Activated CD4-positive, alpha-beta T cell treated with anti-CD3 and anti-CD28 coated beads for 36 hours (primary cell): ENCODE measurements at regions of chrX and their contacts with region 1.

Region 1: DNA sequence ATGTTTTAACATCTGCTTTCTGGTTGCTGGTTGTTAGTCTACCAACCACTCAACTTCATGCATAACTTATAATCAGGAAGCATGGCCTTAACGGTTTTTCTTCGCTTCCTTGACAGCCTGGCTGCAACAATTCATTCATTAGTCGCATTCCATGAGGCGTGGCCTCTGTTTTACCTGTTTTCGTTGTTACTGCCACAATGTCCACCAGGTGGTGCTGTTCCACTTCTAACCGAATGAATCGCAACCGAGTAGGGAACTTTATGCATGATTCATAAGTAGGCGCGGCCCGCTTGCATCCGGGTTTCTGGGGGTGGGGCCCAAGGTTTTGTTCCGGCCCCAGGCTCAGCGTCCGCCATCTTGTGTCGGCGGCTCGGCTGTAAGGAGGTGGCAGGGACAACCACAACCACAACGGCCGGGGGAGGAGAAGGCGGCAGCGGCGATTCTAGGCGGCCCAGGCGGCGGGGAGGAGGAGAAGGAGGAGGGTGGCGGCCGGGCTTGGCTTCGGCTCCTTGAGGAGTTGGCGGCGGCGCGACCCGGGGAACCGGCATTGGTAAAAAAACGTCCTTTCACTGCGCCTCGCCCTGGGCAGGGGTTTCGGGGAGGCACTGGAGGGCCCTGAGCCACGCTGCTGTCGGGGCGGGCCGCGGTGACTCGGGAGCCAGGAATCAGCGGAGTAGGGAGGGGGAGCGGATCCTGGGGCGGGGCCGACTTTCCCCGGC is at the start of gene UBA1:
- DNase-seq: peak; percentile 94
- ATAC-seq: peak; percentile 69
- H3K4me3 Mint-ChIP-seq: peak within 1 kb of the TSS; percentile 91
- H3K27ac Mint-ChIP-seq: peak within 1 kb of the TSS; percentile 92
- H3K4me1 Mint-ChIP-seq: peaks cover 54% of the 10 kb centered on the region
- H3K27me3 Mint-ChIP-seq: no peaks in the 10 kb centered on the region
- total RNA-seq, gene UBA1: 224 to 249 TPM

Region 2: GRCh38 chrX:47093248-47093647 is 100.4 kb before region 1 on chrX:
- CTCF ChIA-PET with region 1: no interaction called
- POLR2A ChIA-PET with region 1: no interaction called
- intact Hi-C with region 1: no loop called
- DNase-seq: peak; percentile 10
- ATAC-seq: no peak
- H3K4me3 Mint-ChIP-seq: no peak overlapping the region
- H3K27ac Mint-ChIP-seq: no peak overlapping the region
- H3K4me1 Mint-ChIP-seq: peaks cover 10% of the 10 kb centered on the region
- H3K27me3 Mint-ChIP-seq: no peaks in the 10 kb centered on the region

Region 3: GRCh38 chrX:47144626-47145394 is 48.8 kb before region 1 on chrX and contains the starts of genes NDUFB11 and RBM10:
- CTCF ChIA-PET with region 1: interaction called, 4 read pairs
- POLR2A ChIA-PET with region 1: interaction called, 6 read pairs
- intact Hi-C with region 1: loop called (anchors 1 to 2 kb)
- DNase-seq: peak; percentile 94
- ATAC-seq: peak; percentile 93
- H3K4me3 Mint-ChIP-seq: peak within 1 kb of the TSS; percentile 98
- H3K27ac Mint-ChIP-seq: peak within 1 kb of the TSS; percentile 100
- H3K4me1 Mint-ChIP-seq: peaks cover 24% of the 10 kb centered on the region
- H3K27me3 Mint-ChIP-seq: no peaks in the 10 kb centered on the region
- total RNA-seq, gene NDUFB11: 89.9 to 90.8 TPM
- total RNA-seq, gene RBM10: 63.8 to 72.1 TPM

Region 4: GRCh38 chrX:47179221-47179920 is 14.3 kb before region 1 on chrX:
- CTCF ChIA-PET with region 1: no interaction called
- POLR2A ChIA-PET with region 1: no interaction called
- intact Hi-C with region 1: no loop called
- DNase-seq: no peak
- ATAC-seq: no peak
- H3K4me3 Mint-ChIP-seq: no peak overlapping the region
- H3K27ac Mint-ChIP-seq: no peak overlapping the region
- H3K4me1 Mint-ChIP-seq: no peaks in the 10 kb centered on the region
- H3K27me3 Mint-ChIP-seq: no peaks in the 10 kb centered on the region

Region 5: DNA sequence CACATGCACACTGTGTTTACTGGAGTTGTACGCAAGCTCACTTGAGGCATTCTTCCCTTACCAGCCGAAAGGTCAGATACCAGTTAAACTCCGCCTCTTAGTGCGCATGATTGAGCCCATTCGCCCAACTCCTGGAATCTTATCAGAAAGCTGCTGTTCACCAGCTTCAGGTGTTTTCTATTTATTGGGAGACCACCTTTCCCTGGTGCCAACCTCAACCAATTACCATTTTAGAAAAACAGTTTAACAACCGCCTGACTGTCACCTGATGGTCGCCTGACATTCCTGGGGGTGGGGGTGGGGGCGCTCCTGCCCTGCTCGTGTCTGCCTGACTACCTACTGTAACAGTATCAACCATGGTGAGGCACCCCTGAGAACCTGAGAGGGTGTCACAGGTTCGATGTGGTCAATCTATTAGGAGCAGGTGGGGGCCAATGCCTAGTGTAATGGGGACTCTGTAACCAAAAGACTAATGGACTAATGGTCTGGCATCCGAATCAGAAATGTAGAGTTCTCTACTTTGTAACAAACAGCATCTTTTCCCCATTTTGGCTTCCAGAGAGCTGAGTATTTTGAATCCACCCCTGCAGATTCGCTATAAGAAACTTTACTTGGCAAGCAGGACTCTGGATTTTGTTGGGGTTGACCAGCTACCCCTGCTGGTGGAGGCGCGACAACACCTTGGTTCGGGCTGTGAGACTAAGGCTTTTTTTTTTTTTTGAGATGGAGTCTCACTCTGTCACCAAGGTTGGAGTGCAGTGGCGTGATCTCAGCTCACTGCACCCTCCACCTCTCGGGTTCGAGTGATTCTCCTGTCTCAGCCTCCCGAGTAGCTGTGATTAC is 118.5 kb after region 1 on chrX:
- CTCF ChIA-PET with region 1: no interaction called
- POLR2A ChIA-PET with region 1: no interaction called
- intact Hi-C with region 1: loop called (anchors 1 to 5 kb)
- DNase-seq: peak; percentile 74
- ATAC-seq: peak; percentile 98
- H3K4me3 Mint-ChIP-seq: no peak overlapping the region
- H3K27ac Mint-ChIP-seq: no peak overlapping the region
- H3K4me1 Mint-ChIP-seq: peaks cover 3% of the 10 kb centered on the region
- H3K27me3 Mint-ChIP-seq: no peaks in the 10 kb centered on the region

Region 6: DNA sequence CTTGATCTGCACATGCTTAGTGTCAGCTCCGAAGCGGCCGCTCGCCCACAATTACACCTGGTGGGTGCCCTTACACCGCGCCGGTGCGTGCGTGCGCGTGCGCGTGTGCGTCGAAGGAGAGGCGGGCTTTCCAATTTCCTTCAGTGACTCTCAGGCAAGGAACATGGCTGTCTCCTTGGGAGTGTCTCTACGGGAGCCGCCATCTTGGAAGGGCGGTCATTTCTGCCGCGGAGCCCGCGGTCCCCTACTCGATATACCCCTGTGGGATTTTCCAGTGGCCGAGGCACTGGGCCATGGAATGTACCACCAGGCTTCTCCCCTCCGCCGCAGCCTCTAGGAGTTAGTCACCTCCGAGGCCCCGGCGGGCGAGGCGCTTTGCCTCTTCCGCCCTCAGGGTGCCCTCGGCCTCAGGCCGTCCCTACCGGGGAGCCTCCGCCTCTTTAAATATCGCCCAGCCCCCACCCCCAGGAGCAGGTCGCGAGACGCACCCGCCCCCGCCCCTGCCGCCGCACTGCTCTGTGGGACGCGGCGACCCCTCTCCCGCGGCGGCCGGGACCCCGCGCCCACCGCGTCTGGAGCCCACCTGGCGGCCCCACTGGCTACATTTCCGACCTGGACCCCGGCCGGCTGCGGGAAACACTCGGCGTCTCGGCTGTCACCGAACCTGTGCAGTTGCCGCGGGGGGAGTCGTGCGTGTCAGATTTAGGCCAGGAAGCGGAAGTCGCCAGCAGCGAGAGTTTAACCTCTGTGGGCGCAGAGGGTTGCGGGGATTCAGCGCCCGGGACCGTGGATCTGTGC is 289.1 kb after region 1 on chrX and contains the start of gene ZNF41:
- CTCF ChIA-PET with region 1: no interaction called
- POLR2A ChIA-PET with region 1: no interaction called
- intact Hi-C with region 1: loop called (anchors 1 to 2 kb)
- DNase-seq: peak; percentile 86
- ATAC-seq: peak; percentile 90
- H3K4me3 Mint-ChIP-seq: peak within 1 kb of the TSS; percentile 97
- H3K27ac Mint-ChIP-seq: peak within 1 kb of the TSS; percentile 94
- H3K4me1 Mint-ChIP-seq: peaks cover 41% of the 10 kb centered on the region
- H3K27me3 Mint-ChIP-seq: no peaks in the 10 kb centered on the region
- total RNA-seq, gene ZNF41: 9.3 to 10.9 TPM

Region 7: DNA sequence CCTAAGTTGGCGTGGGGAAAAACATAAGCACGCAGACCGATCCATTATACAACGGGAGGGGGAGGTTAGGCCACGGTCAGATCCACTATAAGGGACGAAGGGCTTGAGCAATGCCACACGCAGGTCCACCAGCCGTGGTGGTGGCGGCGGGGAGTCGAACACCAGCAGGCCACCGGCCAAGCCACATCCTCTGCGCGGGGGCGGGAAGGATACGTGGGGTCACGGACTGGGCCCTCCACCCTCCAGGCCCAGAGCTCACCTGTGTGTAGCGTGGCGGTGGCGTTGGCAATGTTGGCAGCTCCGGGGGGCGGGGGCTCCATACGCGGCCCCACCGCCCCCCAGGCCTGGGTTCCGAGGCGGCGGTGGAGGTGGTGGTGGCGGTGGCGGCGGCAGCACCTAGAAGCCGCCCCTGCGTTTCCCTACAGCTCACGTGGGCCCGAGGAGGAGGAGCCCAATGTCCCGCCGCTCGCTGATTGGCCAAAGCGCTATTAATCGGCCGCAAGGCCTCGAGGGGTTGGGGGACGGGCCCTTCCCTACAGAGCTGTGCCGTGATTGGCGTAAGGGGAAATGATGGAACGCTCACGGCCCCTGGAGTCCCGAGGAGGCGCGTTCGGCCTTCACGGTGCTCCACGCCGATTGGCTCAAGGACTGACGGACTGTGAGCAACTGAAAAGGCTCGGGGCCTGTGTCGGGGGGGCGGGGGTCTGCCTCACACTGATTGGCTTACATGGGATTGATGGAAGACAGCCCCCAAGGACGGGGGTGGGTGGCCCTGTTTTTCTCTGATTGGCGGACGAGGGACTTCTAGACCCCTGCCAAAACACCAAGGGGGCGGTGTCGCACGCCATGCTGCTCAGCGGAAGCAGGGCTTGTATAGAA is 456.8 kb after region 1 on chrX and contains the start of gene ELK1:
- CTCF ChIA-PET with region 1: no interaction called
- POLR2A ChIA-PET with region 1: no interaction called
- intact Hi-C with region 1: loop called (anchors 5 kb)
- DNase-seq: peak; percentile 93
- ATAC-seq: peak; percentile 95
- H3K4me3 Mint-ChIP-seq: peak within 1 kb of the TSS; percentile 92
- H3K27ac Mint-ChIP-seq: peak within 1 kb of the TSS; percentile 97
- H3K4me1 Mint-ChIP-seq: peaks cover 44% of the 10 kb centered on the region
- H3K27me3 Mint-ChIP-seq: no peaks in the 10 kb centered on the region
- total RNA-seq, gene ELK1: 96.8 to 117 TPM

Region 8: DNA sequence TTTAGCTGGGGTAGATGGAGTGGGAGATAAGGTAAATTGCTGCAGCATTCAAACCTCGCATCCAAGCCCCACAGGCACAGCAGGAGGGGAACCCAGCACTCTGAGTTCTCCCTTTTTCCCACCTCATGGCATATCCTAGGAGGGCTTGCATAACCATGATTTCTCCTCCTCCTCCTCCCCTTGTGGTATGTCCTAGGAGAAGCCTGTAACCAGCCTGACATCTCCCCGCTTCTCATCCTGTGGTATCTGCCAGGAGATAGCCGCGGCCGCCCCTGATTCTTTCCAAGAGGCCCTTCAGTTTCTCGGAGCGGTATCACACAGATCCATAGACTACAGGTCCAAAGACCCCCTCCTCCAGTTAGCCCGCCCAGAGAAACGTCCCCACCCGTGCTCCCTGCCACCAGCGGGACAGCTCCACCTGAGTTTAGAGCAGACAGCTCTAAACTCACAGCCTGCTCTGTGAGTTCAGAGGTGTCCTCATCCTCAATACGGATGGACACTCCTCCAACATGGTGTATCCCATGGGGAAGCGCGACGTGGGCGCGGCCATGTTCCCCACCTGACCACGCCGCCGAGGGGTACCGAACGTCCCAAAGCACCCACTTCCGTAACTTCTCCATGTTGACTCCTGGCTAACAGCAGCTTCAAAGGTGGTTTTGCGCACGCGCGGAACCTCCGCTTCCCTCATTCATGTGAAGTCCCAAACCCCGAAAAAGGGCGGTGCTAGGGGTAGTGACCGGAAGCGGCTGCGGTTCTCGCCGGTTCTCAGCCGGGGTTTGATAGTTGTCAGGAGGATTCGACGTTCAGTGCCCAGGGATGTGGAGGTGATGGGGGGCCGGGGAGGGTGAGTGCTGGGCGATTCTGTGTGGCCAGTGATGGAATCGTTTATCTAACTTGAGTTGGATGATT is 642.8 kb after region 1 on chrX and contains the start of gene ZNF81:
- CTCF ChIA-PET with region 1: no interaction called
- POLR2A ChIA-PET with region 1: no interaction called
- intact Hi-C with region 1: loop called in 1 of 2 experiments (anchors 5 kb)
- DNase-seq: peak; percentile 93
- ATAC-seq: peak; percentile 92
- H3K4me3 Mint-ChIP-seq: peak within 1 kb of the TSS; percentile 95
- H3K27ac Mint-ChIP-seq: peak within 1 kb of the TSS; percentile 97
- H3K4me1 Mint-ChIP-seq: peaks cover 23% of the 10 kb centered on the region
- H3K27me3 Mint-ChIP-seq: no peaks in the 10 kb centered on the region
- total RNA-seq, gene ZNF81: 5.3 to 6.4 TPM